MCF 10A (cell line): ENCODE measurements at regions of chr7 and their contacts with region 1.

Region 1: GRCh38 chr7:72493850-72494661 is 81.9 kb upstream of the CALN1 start:
- DNase-seq: peak; percentile 68
- H3K4me3 Mint-ChIP-seq: no peak overlapping the region
- H3K27ac Mint-ChIP-seq: no peak overlapping the region
- H3K4me1 Mint-ChIP-seq: no peaks in the 10 kb centered on the region
- H3K27me3 Mint-ChIP-seq: no peaks in the 10 kb centered on the region
- CTCF ChIP-seq: peak; percentile 68

Region 2: GRCh38 chr7:71753956-71754664 is 739.9 kb before region 1 on chr7:
- CTCF ChIA-PET with region 1: interaction called, 6 read pairs
- POLR2A ChIA-PET with region 1: no interaction called
- intact Hi-C with region 1: loop called (anchors 1 kb)
- DNase-seq: no peak
- H3K4me3 Mint-ChIP-seq: no peak overlapping the region
- H3K27ac Mint-ChIP-seq: no peak overlapping the region
- H3K4me1 Mint-ChIP-seq: no peaks in the 10 kb centered on the region
- H3K27me3 Mint-ChIP-seq: no peaks in the 10 kb centered on the region
- CTCF ChIP-seq: no peak

Region 3: GRCh38 chr7:72183684-72184234 is 310.3 kb before region 1 on chr7:
- CTCF ChIA-PET with region 1: interaction called, 14 read pairs
- POLR2A ChIA-PET with region 1: no interaction called
- intact Hi-C with region 1: loop called (anchors 1 kb)
- DNase-seq: no peak
- H3K4me3 Mint-ChIP-seq: no peak overlapping the region
- H3K27ac Mint-ChIP-seq: no peak overlapping the region
- H3K4me1 Mint-ChIP-seq: peaks cover 6% of the 10 kb centered on the region
- H3K27me3 Mint-ChIP-seq: no peaks in the 10 kb centered on the region
- CTCF ChIP-seq: peak; percentile 49

Region 4: DNA sequence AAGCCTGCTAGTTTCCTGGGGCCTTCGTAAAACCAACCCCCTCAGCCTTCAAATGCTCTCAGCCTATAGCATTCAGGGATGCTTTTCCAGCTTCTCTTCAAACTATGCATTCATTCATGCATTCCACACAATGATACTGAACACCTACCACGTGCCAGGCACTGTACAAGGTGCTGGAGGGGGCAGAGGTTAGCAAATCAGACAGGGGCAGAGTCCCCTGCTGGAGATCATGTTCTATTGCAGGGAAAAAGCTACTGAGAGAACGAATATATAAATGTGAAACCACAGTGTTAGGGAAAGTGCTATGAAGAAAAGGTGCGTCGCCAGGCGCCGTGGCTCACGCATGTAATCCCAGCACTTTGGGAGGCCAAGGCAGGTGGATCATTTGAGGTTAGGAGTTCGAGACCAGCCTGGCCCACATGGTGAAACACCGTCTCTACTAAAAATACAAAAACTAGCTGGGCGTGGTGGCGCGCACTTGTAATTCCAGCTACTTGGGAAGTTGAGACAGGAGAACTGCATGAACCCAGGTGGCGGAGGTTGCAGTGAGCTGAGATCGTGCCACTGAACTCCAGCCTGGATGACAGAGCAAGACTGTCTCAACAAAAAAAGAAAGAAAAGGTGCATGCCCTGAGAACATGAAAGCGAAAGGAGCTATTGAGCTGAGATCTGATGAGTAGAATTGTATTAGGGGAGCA is 17.3 kb before region 1 on chr7:
- CTCF ChIA-PET with region 1: interaction called, 13 read pairs
- POLR2A ChIA-PET with region 1: no interaction called
- intact Hi-C with region 1: no loop called
- DNase-seq: no peak
- H3K4me3 Mint-ChIP-seq: no peak overlapping the region
- H3K27ac Mint-ChIP-seq: no peak overlapping the region
- H3K4me1 Mint-ChIP-seq: no peaks in the 10 kb centered on the region
- H3K27me3 Mint-ChIP-seq: no peaks in the 10 kb centered on the region
- CTCF ChIP-seq: peak; percentile 14